WTC11 (cell line): ENCODE measurements at regions of chr17 and their contacts with region 1.

Region 1: GRCh38 chr17:34146440-34147043 is 108.5 kb upstream of the CCL2 start:
- DNase-seq: peak; percentile 89
- ATAC-seq: peak; percentile 93
- H3K4me3 Mint-ChIP-seq: no peak overlapping the region
- H3K27ac Mint-ChIP-seq: no peak overlapping the region
- H3K4me1 Mint-ChIP-seq: peaks cover 26% of the 10 kb centered on the region
- H3K27me3 Mint-ChIP-seq: peaks cover 2% of the 10 kb centered on the region; the same call in 1 of the 2 replicates
- CTCF ChIP-seq: peak; percentile 88

Region 2: DNA sequence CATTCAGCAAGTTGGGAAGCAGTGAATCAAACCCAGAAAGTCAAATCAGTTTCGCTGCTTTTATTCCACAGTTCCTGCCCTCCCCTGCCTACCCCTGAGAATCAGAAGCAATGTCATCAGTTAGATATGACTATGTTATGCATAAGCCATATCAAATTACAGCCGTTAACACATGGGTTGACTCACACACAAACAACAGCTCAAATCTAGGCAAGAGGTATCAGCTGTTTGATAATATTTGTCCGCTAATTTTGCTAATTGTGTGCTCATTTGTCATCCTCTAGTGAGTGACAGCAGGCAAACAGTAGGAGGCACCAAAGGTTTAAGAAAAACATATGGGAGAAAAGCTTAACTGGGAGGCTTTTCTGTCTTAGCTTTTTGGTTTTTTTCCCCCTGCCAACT is 218.8 kb before region 1 on chr17:
- CTCF ChIA-PET with region 1: interaction called, 23 read pairs
- POLR2A ChIA-PET with region 1: no interaction called
- DNase-seq: no peak
- ATAC-seq: no peak
- H3K4me3 Mint-ChIP-seq: no peak overlapping the region
- H3K27ac Mint-ChIP-seq: no peak overlapping the region
- H3K4me1 Mint-ChIP-seq: peaks cover 53% of the 10 kb centered on the region
- H3K27me3 Mint-ChIP-seq: no peaks in the 10 kb centered on the region
- CTCF ChIP-seq: no peak

Region 3: GRCh38 chr17:34081269-34081668 is 65.3 kb before region 1 on chr17:
- CTCF ChIA-PET with region 1: interaction called, 51 read pairs
- POLR2A ChIA-PET with region 1: no interaction called
- DNase-seq: peak; percentile 54
- ATAC-seq: peak; percentile 87
- H3K4me3 Mint-ChIP-seq: no peak overlapping the region
- H3K27ac Mint-ChIP-seq: no peak overlapping the region
- H3K4me1 Mint-ChIP-seq: peaks cover 23% of the 10 kb centered on the region
- H3K27me3 Mint-ChIP-seq: no peaks in the 10 kb centered on the region
- CTCF ChIP-seq: 0 out of 2 replicates have a peak, but pooled peaks have one; percentile 42

Region 4: GRCh38 chr17:34156741-34157589 is 10.4 kb after region 1 on chr17:
- CTCF ChIA-PET with region 1: interaction called, 67 read pairs
- POLR2A ChIA-PET with region 1: interaction called, 4 read pairs
- DNase-seq: peak; percentile 85
- ATAC-seq: peak; percentile 45
- H3K4me3 Mint-ChIP-seq: peak overlapping the region; percentile 85
- H3K27ac Mint-ChIP-seq: peak overlapping the region; percentile 98
- H3K4me1 Mint-ChIP-seq: peaks cover 86% of the 10 kb centered on the region
- H3K27me3 Mint-ChIP-seq: peaks cover 14% of the 10 kb centered on the region
- CTCF ChIP-seq: no peak

Region 5: GRCh38 chr17:34171245-34171818 is 24.8 kb after region 1 on chr17:
- CTCF ChIA-PET with region 1: interaction called, 18 read pairs
- POLR2A ChIA-PET with region 1: no interaction called
- DNase-seq: peak; percentile 78
- ATAC-seq: peak; percentile 94
- H3K4me3 Mint-ChIP-seq: no peak overlapping the region
- H3K27ac Mint-ChIP-seq: no peak overlapping the region
- H3K4me1 Mint-ChIP-seq: peaks cover 29% of the 10 kb centered on the region
- H3K27me3 Mint-ChIP-seq: no peaks in the 10 kb centered on the region; the same call in 1 of the 2 replicates
- CTCF ChIP-seq: peak; percentile 96

Region 6: DNA sequence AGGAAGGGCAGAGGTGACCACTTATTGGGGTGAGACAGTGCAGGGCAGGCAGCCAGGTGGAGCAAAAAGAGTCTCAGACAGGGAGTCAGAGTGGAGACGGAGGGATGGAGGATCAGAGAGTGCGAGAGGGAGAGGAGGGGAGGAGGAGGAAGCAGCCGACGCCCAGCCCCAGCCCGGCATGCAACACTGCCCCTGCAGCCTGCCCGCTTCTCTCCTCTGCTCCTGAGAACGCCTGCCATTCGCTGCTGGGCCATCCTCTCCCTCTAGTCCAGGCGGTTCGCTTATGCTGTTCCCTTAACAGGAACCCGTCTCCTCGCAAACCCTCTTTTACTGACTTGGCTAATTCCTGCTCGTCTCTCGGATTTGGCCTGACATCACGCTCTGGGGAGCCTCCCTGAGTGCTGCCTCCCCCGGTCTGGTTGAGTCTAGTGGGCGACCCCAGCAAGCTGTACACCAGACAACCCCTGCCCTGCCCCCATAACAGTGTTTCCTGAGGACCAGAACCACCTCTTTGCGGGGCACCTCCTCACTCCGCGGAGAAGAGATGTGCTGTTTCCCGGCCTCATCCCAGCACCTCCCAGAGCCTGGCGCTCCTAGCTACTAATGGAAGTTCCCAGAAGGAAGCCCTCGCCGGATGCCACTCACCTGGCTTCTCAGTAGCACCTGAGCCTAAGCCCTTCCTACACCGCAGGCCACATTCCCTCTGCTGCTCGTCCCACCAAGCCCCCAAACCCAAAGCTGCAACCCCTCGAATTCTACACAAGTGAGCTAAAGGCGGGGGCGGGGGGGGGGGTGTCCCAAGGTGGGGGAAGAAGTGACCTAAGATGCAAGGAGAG is 277.7 kb after region 1 on chr17:
- CTCF ChIA-PET with region 1: no interaction called
- POLR2A ChIA-PET with region 1: no interaction called
- DNase-seq: peak; percentile 61
- ATAC-seq: peak; percentile 60
- H3K4me3 Mint-ChIP-seq: peak overlapping the region; percentile 71
- H3K27ac Mint-ChIP-seq: no peak overlapping the region
- H3K4me1 Mint-ChIP-seq: peaks cover 10% of the 10 kb centered on the region
- H3K27me3 Mint-ChIP-seq: peaks cover 7% of the 10 kb centered on the region
- CTCF ChIP-seq: no peak